ENCODE measurements at regions of chr9 and their contacts with region 1.

Region 1: GRCh38 chr9:91949946-91950664 is at the start of gene ROR2:
- DNase-seq: peak; percentile 73
- H3K4me3 Mint-ChIP-seq: peak within 1 kb of the TSS; percentile 84
- H3K27ac Mint-ChIP-seq: peak within 1 kb of the TSS; percentile 15
- H3K4me1 Mint-ChIP-seq: peaks cover 14% of the 10 kb centered on the region
- H3K27me3 Mint-ChIP-seq: peaks cover 50% of the 10 kb centered on the region
- total RNA-seq, gene ROR2: 1.1 and 1.6 TPM in 2 replicates

Region 2: GRCh38 chr9:91775011-91775707 is 174.9 kb before region 1 on chr9:
- intact Hi-C with region 1: loop called (anchors 1 kb)
- DNase-seq: peak; percentile 53
- H3K4me3 Mint-ChIP-seq: no peak overlapping the region
- H3K27ac Mint-ChIP-seq: no peak overlapping the region
- H3K4me1 Mint-ChIP-seq: peaks cover 10% of the 10 kb centered on the region
- H3K27me3 Mint-ChIP-seq: peaks cover 18% of the 10 kb centered on the region

Region 3: DNA sequence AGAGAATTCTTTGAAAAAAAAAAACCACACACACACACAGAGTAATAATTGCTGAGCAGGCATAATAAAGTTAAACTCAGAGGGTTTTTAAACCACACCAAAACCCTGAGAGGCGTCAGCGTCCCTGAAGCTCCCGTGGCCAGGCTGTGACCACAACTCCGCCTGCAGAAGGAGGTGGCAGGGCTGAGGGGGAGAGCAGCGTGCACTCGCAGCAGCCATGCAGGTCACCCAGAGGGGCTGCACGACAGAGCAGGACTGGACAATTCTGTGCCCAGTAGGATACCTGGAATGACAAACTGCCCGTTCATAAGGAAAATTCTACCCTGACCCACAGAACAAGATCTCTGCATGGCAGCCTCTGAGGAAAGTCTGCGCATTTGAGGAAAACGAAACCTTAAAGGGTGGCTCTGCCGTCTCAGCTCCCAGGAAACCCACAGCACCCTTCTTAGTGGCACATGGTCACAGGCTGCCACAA is 44.1 kb before region 1 on chr9:
- intact Hi-C with region 1: loop called (anchors 2 kb)
- DNase-seq: peak; percentile 69
- H3K4me3 Mint-ChIP-seq: no peak overlapping the region
- H3K27ac Mint-ChIP-seq: peak overlapping the region; percentile 62
- H3K4me1 Mint-ChIP-seq: peaks cover 50% of the 10 kb centered on the region
- H3K27me3 Mint-ChIP-seq: peaks cover 5% of the 10 kb centered on the region

Region 4: DNA sequence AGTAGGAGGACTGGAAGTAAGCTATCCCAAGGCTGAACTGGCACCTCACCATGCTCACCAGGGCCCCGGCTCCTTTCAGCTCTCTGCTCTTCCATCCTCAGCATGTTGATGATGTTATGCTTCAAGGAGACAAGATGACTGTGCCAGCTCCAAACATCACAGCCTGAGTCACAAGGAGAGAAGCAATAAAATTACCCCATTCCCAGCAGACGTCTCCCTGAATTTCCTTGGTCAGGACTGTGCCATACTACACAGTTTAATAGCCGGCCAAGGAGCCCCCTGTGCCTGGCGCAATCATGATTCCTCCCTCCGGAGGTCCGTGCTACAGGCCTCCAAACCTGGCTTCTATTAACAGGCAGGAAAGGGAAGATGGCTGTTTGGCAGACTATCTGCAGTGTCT is 51.1 kb after region 1 on chr9:
- intact Hi-C with region 1: no loop called
- DNase-seq: no peak
- H3K4me3 Mint-ChIP-seq: no peak overlapping the region
- H3K27ac Mint-ChIP-seq: no peak overlapping the region
- H3K4me1 Mint-ChIP-seq: no peaks in the 10 kb centered on the region
- H3K27me3 Mint-ChIP-seq: peaks cover 8% of the 10 kb centered on the region

Region 5: DNA sequence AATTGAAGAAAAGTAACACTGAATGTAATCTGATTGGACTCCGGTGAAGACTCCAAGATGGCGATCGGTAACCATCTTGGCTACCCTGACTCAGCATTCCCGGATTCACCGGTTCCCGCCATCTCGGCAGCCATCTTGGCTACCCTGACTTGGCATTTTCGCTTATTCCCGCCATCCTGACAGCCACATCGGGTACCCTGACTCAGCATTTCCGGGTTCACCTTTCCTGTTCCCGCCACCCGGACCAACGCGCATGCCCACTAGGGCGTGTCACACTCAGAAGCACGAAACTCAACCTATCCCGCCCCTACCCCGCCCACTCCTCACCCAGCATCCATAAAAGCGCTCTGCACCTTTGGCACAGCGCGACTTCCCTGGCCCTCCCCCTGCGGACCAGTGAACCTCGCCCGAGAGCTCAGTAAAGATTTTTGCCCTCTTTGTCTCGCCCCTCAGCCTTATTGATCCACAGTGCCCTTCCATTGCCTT is 147.9 kb after region 1 on chr9:
- intact Hi-C with region 1: loop called (anchors 10 kb)
- DNase-seq: peak; percentile 57
- H3K4me3 Mint-ChIP-seq: peak overlapping the region; percentile 16
- H3K27ac Mint-ChIP-seq: peak overlapping the region; percentile 80
- H3K4me1 Mint-ChIP-seq: peaks cover 45% of the 10 kb centered on the region
- H3K27me3 Mint-ChIP-seq: no peaks in the 10 kb centered on the region

Region 6: GRCh38 chr9:92247296-92247695 is 297.2 kb after region 1 on chr9:
- intact Hi-C with region 1: no loop called
- DNase-seq: no peak
- H3K4me3 Mint-ChIP-seq: no peak overlapping the region
- H3K27ac Mint-ChIP-seq: no peak overlapping the region
- H3K4me1 Mint-ChIP-seq: peaks cover 5% of the 10 kb centered on the region
- H3K27me3 Mint-ChIP-seq: no peaks in the 10 kb centered on the region